ENCODE measurements at regions of chr14 and their contacts with region 1.

Region 1: DNA sequence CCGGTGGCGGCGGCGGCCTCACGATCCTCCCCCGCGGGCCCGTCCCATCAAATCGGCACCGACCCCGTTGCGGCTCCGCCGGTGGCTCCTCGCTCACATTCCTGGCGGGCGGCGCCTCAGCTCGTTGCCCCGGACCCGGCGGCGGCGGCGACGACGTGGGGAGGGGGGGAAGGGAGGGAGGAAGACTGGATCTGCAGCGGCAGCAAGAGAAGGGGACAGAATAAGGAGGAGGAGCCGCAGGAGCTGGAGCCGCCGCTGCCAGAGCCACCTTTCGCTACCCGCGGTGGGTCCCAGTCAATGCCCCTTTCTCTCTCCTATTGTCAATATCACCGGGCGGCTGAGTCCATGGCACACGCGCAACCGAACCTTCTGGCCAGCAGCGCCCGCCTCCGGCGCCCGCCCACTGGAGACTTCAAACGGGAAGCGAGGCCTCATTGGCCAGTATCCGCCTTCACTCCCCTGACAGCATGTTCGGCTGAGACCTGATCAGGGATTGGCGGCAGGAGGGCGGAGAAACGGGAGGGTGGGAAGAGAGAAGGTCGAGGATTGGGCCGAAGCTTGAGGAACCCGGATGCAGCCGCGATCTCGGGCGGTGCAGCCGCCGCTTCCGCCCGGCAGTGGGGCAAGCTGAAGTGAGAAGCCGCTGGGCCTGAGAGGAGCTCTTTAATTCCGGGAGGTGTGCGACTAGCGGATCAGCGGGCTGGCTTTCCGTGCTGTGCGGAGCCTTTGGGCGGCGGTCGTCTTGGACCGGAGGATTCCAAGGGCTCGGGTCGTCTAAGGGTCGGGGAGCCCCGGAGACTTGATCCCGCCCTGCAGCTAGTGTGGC is at the start of gene PPP2R5E:
- DNase-seq: peak; percentile 97
- H3K4me3 Mint-ChIP-seq: peak within 1 kb of the TSS; percentile 97
- H3K27ac Mint-ChIP-seq: peak within 1 kb of the TSS; percentile 95
- H3K4me1 Mint-ChIP-seq: peaks cover 36% of the 10 kb centered on the region
- H3K27me3 Mint-ChIP-seq: peaks cover 2% of the 10 kb centered on the region
- total RNA-seq, gene PPP2R5E: 46.3 and 47.6 TPM in 2 replicates

Region 2: DNA sequence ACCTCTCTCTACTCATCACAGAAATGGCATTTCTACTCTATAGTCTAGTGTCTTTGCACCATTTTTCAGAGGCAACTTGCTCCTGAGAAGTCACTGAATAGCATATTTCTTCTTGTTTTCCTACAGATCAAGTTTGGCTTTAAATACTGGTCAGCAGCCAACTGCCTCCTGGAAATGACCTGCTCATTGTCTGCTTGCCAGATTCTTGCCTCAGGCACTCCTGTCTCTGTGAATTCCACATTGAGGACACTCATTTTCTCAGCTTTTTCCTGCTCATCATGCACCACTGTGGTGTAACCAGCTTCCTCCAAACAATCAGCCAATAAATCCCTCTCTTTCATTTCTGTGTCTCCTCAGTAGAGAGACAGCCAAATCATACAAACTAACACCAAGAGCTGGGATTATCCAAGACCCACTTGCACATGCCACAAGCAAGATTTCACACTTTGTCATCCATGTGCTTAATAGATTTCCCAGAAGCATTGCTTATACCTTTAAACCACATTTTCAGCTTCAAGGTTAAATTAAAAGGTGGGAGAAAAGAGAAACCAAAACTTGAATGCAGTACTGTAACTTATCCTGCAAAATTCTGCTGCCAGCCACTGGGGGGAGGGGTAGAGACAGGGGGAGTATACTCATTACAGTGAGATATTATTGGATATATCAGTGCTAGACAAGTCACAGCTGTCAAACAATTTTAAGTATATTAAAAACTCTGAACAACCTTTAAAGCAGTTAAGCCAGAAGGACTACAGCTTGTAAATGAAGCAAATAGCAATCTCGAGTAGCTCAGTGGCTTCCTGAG is 105.1 kb before region 1 on chr14:
- intact Hi-C with region 1: loop called (anchors 1 kb)
- DNase-seq: peak; percentile 30
- H3K4me3 Mint-ChIP-seq: peak overlapping the region; percentile 61
- H3K27ac Mint-ChIP-seq: peak overlapping the region; percentile 53
- H3K4me1 Mint-ChIP-seq: peaks cover 45% of the 10 kb centered on the region
- H3K27me3 Mint-ChIP-seq: no peaks in the 10 kb centered on the region

Region 3: GRCh38 chr14:63478010-63478409 is 65.2 kb before region 1 on chr14:
- intact Hi-C with region 1: loop called (anchors 1 kb)
- DNase-seq: peak; percentile 45
- H3K4me3 Mint-ChIP-seq: peak overlapping the region; percentile 27
- H3K27ac Mint-ChIP-seq: peak overlapping the region; percentile 57
- H3K4me1 Mint-ChIP-seq: peaks cover 47% of the 10 kb centered on the region
- H3K27me3 Mint-ChIP-seq: no peaks in the 10 kb centered on the region

Region 4: DNA sequence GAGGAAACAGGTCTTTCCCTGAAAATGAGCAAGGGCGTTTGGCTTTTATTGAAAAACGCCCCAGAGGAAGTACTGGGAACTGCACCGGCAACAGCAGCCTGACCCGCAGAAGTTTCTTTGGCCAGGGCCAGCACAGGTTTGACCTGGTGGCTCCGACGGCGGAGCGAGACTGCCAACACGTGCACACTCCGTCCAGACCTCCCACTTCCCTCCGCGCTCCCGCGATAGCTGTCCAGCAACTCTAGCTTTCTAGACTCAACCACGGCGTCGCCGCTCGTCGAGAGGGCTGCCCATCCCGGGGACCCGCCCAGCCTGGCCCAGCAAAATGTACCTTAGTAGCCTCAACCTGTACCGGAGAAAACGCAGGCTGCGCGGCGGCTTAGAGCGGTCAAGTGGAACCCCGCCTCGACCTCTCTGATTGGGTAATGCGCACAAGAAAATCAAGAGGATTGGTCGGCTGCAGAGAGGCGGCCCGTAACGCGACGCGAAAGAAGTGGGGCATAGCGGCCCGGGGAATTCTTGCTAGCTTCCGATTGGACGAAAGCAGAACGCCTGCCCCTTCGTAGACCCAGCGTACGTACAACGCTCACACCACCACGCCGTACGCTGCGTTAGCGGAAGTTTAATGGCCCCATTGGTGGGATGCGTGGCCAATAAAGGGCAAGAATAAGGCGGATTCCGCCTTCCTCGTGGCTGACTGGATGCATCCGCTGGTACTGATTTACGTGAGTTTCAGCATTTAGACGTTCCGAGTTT is 98.4 kb after region 1 on chr14 and contains the start of gene WDR89:
- intact Hi-C with region 1: loop called (anchors 1 kb)
- DNase-seq: peak; percentile 97
- H3K4me3 Mint-ChIP-seq: peak within 1 kb of the TSS; percentile 88
- H3K27ac Mint-ChIP-seq: peak within 1 kb of the TSS; percentile 98
- H3K4me1 Mint-ChIP-seq: peaks cover 27% of the 10 kb centered on the region
- H3K27me3 Mint-ChIP-seq: no peaks in the 10 kb centered on the region
- total RNA-seq, gene WDR89: 26.8 and 27.4 TPM in 2 replicates

Region 5: GRCh38 chr14:63745858-63746425 is 202.7 kb after region 1 on chr14:
- intact Hi-C with region 1: no loop called
- DNase-seq: no peak
- H3K4me3 Mint-ChIP-seq: no peak overlapping the region
- H3K27ac Mint-ChIP-seq: peak overlapping the region; percentile 13
- H3K4me1 Mint-ChIP-seq: peaks cover 10% of the 10 kb centered on the region
- H3K27me3 Mint-ChIP-seq: peaks cover 3% of the 10 kb centered on the region

Region 6: GRCh38 chr14:63770187-63770807 is 227.1 kb after region 1 on chr14:
- intact Hi-C with region 1: loop called (anchors 2 kb)
- DNase-seq: peak; percentile 33
- H3K4me3 Mint-ChIP-seq: no peak overlapping the region
- H3K27ac Mint-ChIP-seq: no peak overlapping the region
- H3K4me1 Mint-ChIP-seq: peaks cover 17% of the 10 kb centered on the region
- H3K27me3 Mint-ChIP-seq: no peaks in the 10 kb centered on the region

Region 7: GRCh38 chr14:64387694-64388532 is 844.7 kb after region 1 on chr14 and contains the start of gene MTHFD1:
- intact Hi-C with region 1: loop called (anchors 5 kb)
- DNase-seq: peak; percentile 96
- H3K4me3 Mint-ChIP-seq: peak within 1 kb of the TSS; percentile 97
- H3K27ac Mint-ChIP-seq: peak within 1 kb of the TSS; percentile 90
- H3K4me1 Mint-ChIP-seq: peaks cover 29% of the 10 kb centered on the region
- H3K27me3 Mint-ChIP-seq: no peaks in the 10 kb centered on the region
- total RNA-seq, gene MTHFD1: 241 and 244 TPM in 2 replicates

Measured in activated T-helper 1 cell treated with anti-CD3 and anti-CD28 coated beads, Interleukin-12 subunit alpha, Interleukin-12 subunit beta, Interleukin-2, Interleukin-4 antibody, amounts not matched to agents 30 ng/mL and 10 ng/mL and 1 ng/mL, durations not matched to agents 14 hours and 24 hours and 36 hours (primary cell).